Activated T-helper 2 cell treated with anti-CD3 and anti-CD28 coated beads, Interferon-gamma antibody, Interleukin-2, Interleukin-4, amounts not matched to agents 10 μg/mL and 5 μg/mL and 100 μg/mL, durations not matched to agents 14 hours and 24 hours and 36 hours (primary cell): ENCODE measurements at regions of chr5 and their contacts with region 1.

Region 1: DNA sequence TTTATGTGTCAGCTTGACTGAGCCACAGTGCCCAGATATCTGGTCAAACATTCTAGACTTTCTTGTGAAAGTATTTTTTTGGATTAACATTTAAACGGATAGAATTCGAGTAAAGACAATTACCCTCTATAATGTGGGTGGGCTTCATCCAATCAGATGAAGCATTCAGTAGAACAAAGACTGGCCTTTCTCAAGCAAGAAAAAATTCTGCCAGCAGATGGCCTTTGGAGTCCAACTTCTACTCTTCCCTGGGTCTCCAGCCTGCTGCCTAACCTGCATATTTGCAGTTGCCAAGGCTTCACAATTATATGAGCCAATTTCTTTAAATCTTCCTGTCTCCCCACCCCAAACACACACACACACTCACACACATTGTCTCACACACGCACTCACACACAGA is 86.4 kb downstream of the MED10 start:
- DNase-seq: no peak
- H3K4me3 Mint-ChIP-seq: no peak overlapping the region
- H3K27ac Mint-ChIP-seq: no peak overlapping the region
- H3K4me1 Mint-ChIP-seq: no peaks in the 10 kb centered on the region
- H3K27me3 Mint-ChIP-seq: peaks cover 10% of the 10 kb centered on the region

Region 2: DNA sequence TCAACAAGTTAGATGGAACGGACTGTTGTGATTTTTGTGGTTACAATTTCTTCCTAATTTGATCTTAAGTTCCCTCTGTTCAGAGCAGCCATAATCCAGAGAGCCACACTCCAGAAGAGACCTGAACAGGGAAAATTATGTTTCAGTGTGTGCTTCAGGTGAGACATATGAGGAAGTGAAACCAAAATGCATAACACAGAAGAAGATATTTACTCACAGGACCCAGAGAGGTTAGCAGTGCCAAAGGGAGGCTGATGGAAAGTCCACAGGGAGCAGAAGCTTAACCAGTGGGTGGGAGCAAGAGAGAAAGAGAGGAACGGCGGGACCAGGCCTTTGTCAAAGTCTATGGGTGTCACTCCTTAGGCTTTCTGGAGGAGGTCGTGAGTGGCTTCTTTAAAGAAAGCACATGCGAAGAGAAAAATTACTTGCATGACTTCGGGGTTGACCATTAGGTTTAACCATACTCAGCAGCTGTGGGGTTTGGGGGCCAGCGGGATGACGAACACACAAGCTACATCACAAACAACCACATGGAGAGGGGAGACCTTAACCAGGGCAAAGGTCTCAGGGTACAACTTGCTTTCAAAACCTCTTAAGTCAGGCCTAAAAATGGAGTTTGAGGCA is 55.0 kb before region 1 on chr5:
- intact Hi-C with region 1: no loop called
- DNase-seq: no peak
- H3K4me3 Mint-ChIP-seq: no peak overlapping the region
- H3K27ac Mint-ChIP-seq: no peak overlapping the region
- H3K4me1 Mint-ChIP-seq: no peaks in the 10 kb centered on the region
- H3K27me3 Mint-ChIP-seq: no peaks in the 10 kb centered on the region

Region 3: DNA sequence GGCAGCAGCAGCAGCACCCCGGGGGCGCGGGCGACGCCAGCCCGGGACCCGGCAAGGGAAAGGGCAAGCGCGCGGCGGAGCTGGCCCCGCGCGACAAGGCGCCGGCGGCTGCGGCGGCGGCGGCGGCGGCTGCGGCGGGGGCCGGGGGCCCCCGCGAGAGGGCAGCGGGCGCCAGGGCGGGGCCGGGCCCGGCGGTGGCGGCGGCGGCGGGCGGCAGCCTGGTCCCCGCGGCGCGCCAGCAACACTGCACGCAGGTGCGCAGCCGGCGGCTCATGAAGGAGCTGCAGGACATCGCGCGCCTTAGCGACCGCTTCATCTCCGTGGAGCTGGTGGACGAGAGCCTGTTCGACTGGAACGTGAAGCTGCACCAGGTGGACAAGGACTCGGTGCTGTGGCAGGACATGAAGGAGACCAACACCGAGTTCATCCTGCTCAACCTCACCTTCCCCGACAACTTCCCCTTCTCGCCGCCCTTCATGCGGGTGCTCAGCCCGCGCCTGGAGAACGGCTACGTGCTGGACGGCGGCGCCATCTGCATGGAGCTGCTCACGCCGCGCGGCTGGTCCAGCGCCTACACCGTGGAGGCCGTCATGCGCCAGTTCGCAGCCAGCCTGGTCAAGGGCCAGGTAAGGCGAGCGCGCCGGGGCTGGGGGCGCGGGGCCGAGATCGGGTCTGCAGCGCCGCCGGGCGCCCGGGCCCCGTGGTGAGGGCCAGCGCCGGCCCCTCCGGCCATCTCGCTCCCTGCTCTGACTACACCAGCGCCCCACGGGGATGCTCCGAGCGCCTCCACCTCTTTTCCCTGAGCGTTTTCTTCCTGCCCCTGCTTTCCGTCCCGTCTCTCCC is 156.9 kb after region 1 on chr5 and contains the start of gene UBE2QL1:
- intact Hi-C with region 1: no loop called
- DNase-seq: no peak
- H3K4me3 Mint-ChIP-seq: peak within 1 kb of the TSS; percentile 79
- H3K27ac Mint-ChIP-seq: no peak within 1 kb of the TSS
- H3K4me1 Mint-ChIP-seq: peaks cover 2% of the 10 kb centered on the region
- H3K27me3 Mint-ChIP-seq: peaks cover 45% of the 10 kb centered on the region
- total RNA-seq, gene UBE2QL1: 0.67 and 0.68 TPM in 2 replicates

Region 4: GRCh38 chr5:6576861-6577501 is 285.0 kb after region 1 on chr5:
- intact Hi-C with region 1: loop called (anchors 10 kb)
- DNase-seq: no peak
- H3K4me3 Mint-ChIP-seq: no peak overlapping the region
- H3K27ac Mint-ChIP-seq: no peak overlapping the region
- H3K4me1 Mint-ChIP-seq: no peaks in the 10 kb centered on the region
- H3K27me3 Mint-ChIP-seq: peaks cover 25% of the 10 kb centered on the region